IMR-90 (cell line): ENCODE measurements at regions of chr17 and their contacts with region 1.

Region 1: DNA sequence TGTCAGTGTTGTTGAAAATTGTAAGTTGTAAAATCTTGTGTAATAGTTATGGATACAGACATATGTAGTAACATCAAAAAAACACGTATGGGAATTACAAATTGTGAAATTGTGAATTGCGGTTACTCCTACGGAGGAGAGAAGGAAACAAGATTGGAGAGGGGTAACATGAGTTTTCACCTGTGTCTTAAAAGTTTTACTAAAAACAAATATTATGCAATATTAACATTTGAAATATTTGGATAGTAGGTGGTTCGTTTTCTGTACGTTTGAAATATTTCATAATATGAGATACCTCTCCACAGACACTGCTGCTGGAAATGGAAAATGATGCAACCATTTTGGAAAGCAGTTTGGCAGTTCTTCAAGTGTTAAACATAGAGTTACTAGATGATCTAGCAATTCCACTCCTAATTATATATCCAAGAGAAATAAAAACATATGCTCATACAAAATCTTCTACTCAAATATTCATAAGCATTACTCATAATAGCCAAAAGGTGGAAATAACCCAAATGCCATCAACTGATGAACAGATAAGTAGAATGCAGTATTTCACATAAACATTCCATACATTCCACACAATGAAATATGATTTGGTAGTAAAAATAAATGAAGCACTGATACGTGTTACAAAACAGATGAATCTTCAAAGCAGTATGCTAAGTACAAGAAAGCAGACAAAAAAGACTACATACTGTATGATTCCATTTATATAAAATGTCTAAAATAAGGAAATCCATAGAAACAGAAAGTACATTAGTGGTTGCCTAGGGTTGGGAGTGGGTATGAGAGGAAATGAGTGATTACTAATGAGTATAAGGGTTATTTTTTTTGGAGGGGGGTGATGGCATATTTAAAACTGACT is 40.7 kb upstream of the ABCA10 start:
- DNase-seq: peak; percentile 66
- ATAC-seq: peak; percentile 76
- H3K4me3 ChIP-seq: no peak overlapping the region
- H3K27ac ChIP-seq: no peak overlapping the region
- H3K4me1 ChIP-seq: no peaks in the 10 kb centered on the region
- H3K27me3 ChIP-seq: no peaks in the 10 kb centered on the region
- CTCF ChIP-seq: no peak
- POLR2A ChIP-seq: no peak
- RAD21 ChIP-seq: no peak

Region 2: DNA sequence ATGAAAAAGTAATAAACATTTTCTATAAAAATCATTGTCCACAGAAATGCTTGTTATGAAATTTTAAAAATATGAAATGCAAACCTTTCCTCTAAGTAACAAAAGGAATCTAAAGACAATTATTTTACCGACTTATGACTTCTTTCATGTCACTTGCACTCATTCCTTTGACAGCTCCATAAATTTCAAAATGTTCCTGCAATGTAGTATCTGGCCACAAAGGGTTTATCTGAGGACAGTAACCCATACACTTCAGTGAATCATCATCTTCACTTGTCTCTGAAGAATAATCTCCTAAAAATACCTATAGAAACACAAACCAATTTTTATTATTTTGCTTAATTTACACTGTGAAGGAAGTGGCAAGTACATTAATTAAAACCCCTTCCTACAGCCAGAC is 15.2 kb before region 1 on chr17:
- CTCF ChIA-PET with region 1: no interaction called
- POLR2A ChIA-PET with region 1: no interaction called
- dilution Hi-C with region 1: no loop called
- in situ Hi-C with region 1: no loop called
- intact Hi-C with region 1: loop called (anchors 1 kb)
- DNase-seq: no peak
- ATAC-seq: no peak
- H3K4me3 ChIP-seq: no peak overlapping the region
- H3K27ac ChIP-seq: no peak overlapping the region
- H3K4me1 ChIP-seq: no peaks in the 10 kb centered on the region
- H3K27me3 ChIP-seq: no peaks in the 10 kb centered on the region
- CTCF ChIP-seq: no peak
- POLR2A ChIP-seq: no peak
- RAD21 ChIP-seq: no peak

Region 3: DNA sequence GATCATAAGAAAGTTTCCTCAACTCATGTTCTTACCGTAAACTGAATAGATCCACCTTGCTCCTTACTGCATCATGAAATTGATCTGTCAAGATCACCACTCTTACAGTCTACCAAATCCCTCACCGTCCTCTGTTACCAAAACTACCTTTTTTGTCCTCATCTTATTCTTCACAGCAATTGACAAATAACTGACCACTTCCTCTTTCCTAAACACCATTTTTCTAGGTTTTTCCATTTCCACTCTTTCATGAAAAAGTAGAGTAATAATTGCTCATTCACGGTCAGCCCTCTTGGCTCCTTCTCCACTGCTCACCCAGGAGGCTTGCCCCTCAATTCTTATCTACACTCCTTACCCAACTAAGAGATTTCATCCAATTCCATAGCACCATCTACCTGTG is 12.6 kb after region 1 on chr17:
- CTCF ChIA-PET with region 1: no interaction called
- POLR2A ChIA-PET with region 1: no interaction called
- dilution Hi-C with region 1: no loop called
- in situ Hi-C with region 1: no loop called
- intact Hi-C with region 1: no loop called
- DNase-seq: no peak
- ATAC-seq: no peak
- H3K4me3 ChIP-seq: no peak overlapping the region
- H3K27ac ChIP-seq: no peak overlapping the region
- H3K4me1 ChIP-seq: no peaks in the 10 kb centered on the region
- H3K27me3 ChIP-seq: no peaks in the 10 kb centered on the region
- CTCF ChIP-seq: no peak
- POLR2A ChIP-seq: no peak
- RAD21 ChIP-seq: no peak

Region 4: DNA sequence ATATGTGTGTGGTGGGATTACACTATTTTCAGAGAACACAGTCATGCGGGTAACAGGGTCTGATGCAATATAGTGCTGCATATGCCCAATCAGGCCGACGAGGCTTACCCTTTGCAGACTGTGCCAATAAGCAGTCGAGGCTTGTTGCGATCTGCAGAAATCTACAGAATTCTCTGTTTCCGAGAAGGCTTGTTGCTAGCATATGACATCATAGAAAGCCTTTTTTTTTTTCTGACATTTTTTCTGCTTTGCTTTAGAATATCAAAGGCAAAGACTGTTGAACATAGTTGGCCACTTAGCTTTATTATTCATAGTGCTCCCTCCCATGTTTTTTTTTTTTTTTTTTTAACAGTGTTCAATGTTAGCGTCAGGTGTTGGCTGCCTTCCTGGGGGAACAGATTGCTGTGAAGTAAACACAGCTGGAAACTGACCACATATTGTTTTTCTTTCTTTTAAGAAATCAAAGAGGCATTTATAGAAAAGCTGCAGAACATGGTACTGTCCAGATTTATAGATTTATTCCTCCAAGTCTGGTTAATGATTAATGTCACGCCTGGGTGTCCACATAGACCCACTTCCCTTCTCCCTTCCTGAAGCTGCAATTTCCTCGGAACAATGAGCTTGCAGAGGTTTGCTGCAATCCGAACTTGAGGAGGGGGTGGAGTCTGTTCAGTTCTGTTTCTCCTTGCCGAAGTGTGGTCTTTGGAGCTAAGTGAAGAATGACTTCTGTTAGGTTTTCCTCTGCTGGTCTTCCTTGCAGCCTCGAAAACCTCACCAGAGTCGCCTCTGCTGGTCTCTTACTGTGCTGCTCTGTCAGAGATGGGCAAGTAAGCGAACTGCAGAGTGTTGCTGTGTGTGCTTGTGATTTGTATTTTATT is 232.5 kb after region 1 on chr17:
- CTCF ChIA-PET with region 1: no interaction called
- POLR2A ChIA-PET with region 1: no interaction called
- dilution Hi-C with region 1: no loop called
- in situ Hi-C with region 1: no loop called
- intact Hi-C with region 1: loop called (anchors 5 kb)
- DNase-seq: peak; percentile 90
- ATAC-seq: peak; percentile 72
- H3K4me3 ChIP-seq: peak overlapping the region; percentile 2; the same call in 1 of the 2 replicates
- H3K27ac ChIP-seq: peak overlapping the region; percentile 71; the same call in 1 of the 2 replicates
- H3K4me1 ChIP-seq: peaks cover 8% of the 10 kb centered on the region; the same call in 1 of the 2 replicates
- H3K27me3 ChIP-seq: no peaks in the 10 kb centered on the region
- CTCF ChIP-seq: no peak
- POLR2A ChIP-seq: no peak
- RAD21 ChIP-seq: no peak